MCF 10A (cell line): ENCODE measurements at regions of chr16 and their contacts with region 1.

Region 1: GRCh38 chr16:23423496-23424049 is 29.4 kb downstream of the COG7 start:
- DNase-seq: peak; percentile 99
- H3K4me3 Mint-ChIP-seq: peak overlapping the region; percentile 54
- H3K27ac Mint-ChIP-seq: peak overlapping the region; percentile 81
- H3K4me1 Mint-ChIP-seq: peaks cover 23% of the 10 kb centered on the region
- H3K27me3 Mint-ChIP-seq: no peaks in the 10 kb centered on the region
- CTCF ChIP-seq: no peak

Region 2: DNA sequence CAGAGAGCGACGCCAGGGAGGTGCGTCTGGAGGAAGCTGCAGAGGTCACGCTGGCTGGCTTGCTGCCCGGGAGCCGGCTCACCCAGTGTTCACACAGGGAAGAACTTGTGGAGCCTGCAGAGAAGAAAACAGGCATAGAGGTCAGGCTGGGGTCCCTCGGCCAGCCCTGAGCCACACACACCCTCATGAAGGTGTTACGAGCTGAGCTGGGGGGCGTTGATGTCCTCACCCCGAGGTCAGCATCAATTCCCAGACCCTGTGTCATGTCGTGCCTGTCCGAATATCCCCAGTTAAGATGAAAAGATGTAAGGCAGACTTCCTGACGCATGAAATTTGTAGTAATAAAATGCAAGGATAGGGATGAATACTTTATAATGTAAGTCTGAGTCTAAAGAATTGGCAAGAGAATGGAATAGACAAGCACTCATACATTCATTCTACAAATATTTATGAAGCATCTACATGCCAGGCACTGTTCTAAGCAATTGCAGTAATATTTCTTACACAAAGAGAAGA is 351.4 kb before region 1 on chr16:
- CTCF ChIA-PET with region 1: no interaction called
- POLR2A ChIA-PET with region 1: no interaction called
- intact Hi-C with region 1: no loop called
- DNase-seq: peak; percentile 64
- H3K4me3 Mint-ChIP-seq: peak overlapping the region; percentile 44
- H3K27ac Mint-ChIP-seq: peak overlapping the region; percentile 82
- H3K4me1 Mint-ChIP-seq: peaks cover 19% of the 10 kb centered on the region
- H3K27me3 Mint-ChIP-seq: no peaks in the 10 kb centered on the region
- CTCF ChIP-seq: no peak

Region 3: GRCh38 chr16:23182460-23183309 is 240.9 kb before region 1 on chr16 and contains the start of gene SCNN1G:
- CTCF ChIA-PET with region 1: interaction called, 19 read pairs
- POLR2A ChIA-PET with region 1: interaction called, 39 read pairs
- intact Hi-C with region 1: no loop called
- DNase-seq: peak; percentile 89
- H3K4me3 Mint-ChIP-seq: peak within 1 kb of the TSS; percentile 84
- H3K27ac Mint-ChIP-seq: peak within 1 kb of the TSS; percentile 35
- H3K4me1 Mint-ChIP-seq: peaks cover 24% of the 10 kb centered on the region
- H3K27me3 Mint-ChIP-seq: no peaks in the 10 kb centered on the region
- CTCF ChIP-seq: peak; percentile 99
- total RNA-seq, gene SCNN1G: 7.9 and 11.9 TPM in 2 replicates

Region 4: DNA sequence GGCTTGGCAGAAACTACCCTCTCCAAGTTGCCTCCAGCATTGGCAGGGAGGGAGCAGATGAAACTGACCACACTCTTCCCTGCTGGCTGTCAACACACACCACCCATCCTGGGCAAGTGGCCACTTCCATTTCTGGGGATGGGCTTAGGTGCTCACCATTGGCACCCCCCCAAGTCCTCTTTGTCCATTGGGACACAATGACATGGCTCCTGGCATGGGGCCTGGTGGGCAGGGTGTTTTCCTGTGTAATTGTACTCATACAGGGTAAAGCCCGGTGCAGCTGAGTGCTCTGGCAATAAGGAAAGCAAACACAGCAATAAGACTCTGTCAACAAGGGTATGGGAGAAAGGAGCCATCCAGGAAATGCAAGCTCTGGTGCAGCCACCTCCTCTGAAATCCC is 98.8 kb before region 1 on chr16:
- CTCF ChIA-PET with region 1: interaction called, 3 read pairs
- POLR2A ChIA-PET with region 1: interaction called, 11 read pairs
- intact Hi-C with region 1: no loop called
- DNase-seq: peak; percentile 95
- H3K4me3 Mint-ChIP-seq: peak overlapping the region; percentile 57
- H3K27ac Mint-ChIP-seq: peak overlapping the region; percentile 95
- H3K4me1 Mint-ChIP-seq: peaks cover 16% of the 10 kb centered on the region
- H3K27me3 Mint-ChIP-seq: no peaks in the 10 kb centered on the region
- CTCF ChIP-seq: no peak

Region 5: DNA sequence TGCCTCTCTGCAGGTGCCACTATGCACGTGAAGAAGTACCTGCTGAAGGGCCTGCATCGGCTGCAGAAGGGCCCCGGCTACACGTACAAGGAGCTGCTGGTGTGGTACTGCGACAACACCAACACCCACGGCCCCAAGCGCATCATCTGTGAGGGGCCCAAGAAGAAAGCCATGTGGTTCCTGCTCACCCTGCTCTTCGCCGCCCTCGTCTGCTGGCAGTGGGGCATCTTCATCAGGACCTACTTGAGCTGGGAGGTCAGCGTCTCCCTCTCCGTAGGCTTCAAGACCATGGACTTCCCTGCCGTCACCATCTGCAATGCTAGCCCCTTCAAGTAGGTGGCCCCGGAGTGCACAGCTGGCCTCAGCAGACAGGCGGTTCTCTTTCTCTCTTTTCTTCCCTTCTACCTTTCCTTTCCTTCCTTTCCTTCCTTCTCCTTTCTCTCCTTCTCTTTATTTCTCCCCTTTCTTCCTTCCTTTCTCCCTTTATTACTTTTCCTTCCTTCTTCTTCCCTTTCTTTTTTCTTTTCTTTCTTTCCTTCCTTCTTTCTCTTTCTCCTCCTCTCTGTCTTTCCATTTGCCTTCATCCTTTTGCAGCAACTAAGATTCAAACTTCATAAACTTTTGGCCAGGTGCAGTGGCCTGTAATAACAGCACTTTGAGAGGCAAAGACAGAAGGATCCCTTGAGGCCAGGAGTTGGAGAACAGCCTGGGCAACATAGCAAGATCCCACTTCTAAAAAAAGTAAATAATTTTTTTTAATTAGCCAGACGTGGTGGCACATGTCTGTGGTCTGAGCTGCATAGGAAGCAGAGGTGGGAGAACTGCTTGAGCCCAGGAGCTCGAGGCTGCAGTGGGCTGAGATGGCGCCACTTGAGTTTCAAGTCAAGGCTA is 74.7 kb before region 1 on chr16:
- CTCF ChIA-PET with region 1: no interaction called
- POLR2A ChIA-PET with region 1: no interaction called
- intact Hi-C with region 1: no loop called
- DNase-seq: no peak
- H3K4me3 Mint-ChIP-seq: no peak overlapping the region
- H3K27ac Mint-ChIP-seq: peak overlapping the region; percentile 81
- H3K4me1 Mint-ChIP-seq: peaks cover 6% of the 10 kb centered on the region
- H3K27me3 Mint-ChIP-seq: no peaks in the 10 kb centered on the region
- CTCF ChIP-seq: no peak

Region 6: GRCh38 chr16:23391381-23392222 is 32.0 kb before region 1 on chr16:
- CTCF ChIA-PET with region 1: interaction called, 12 read pairs
- POLR2A ChIA-PET with region 1: interaction called, 84 read pairs
- intact Hi-C with region 1: no loop called
- DNase-seq: peak; percentile 29
- H3K4me3 Mint-ChIP-seq: no peak overlapping the region
- H3K27ac Mint-ChIP-seq: peak overlapping the region; percentile 92
- H3K4me1 Mint-ChIP-seq: peaks cover 36% of the 10 kb centered on the region
- H3K27me3 Mint-ChIP-seq: no peaks in the 10 kb centered on the region
- CTCF ChIP-seq: no peak